ENCODE measurements at regions of chr1 and their contacts with region 1.

Region 1: DNA sequence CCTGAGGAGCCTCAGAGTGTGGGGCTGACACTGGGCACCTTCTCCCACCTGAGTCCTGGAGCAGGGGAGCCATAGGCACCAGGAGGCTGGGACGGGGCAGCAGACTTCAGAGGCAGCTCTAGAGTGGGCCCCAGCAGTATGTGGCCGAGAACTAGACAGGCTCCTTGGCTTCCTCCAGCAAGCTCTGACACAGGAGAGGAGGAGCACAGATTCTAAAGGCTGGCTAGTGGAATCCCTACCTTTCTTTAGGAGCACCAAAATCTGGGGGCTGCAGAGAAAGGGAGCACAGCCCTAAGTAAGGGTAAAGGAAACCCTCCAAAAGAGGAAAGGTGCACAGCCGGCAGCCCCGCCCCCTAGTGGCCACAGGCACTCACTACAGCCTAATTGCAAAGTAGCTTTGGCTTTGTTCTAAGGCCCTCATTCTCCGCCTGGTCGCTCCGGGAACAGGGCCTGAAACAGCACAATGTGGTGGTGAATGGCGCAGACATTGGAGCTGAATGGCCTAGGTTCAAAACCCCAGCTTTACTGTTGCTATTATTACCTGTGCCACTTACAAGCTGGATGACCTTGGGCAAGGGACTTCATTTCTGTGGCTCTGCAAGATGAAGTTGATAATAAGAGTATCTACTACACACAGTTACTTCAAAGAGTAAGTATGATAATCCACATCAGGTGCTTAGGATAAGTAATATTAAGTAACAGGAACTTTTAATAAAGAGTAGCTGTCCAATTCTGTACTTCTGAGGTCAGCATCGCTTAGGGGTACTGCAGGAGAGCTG is 8.8 kb upstream of the GUCA2A start:
- DNase-seq: peak; percentile 82
- CTCF ChIP-seq: peak; percentile 95

Region 2: DNA sequence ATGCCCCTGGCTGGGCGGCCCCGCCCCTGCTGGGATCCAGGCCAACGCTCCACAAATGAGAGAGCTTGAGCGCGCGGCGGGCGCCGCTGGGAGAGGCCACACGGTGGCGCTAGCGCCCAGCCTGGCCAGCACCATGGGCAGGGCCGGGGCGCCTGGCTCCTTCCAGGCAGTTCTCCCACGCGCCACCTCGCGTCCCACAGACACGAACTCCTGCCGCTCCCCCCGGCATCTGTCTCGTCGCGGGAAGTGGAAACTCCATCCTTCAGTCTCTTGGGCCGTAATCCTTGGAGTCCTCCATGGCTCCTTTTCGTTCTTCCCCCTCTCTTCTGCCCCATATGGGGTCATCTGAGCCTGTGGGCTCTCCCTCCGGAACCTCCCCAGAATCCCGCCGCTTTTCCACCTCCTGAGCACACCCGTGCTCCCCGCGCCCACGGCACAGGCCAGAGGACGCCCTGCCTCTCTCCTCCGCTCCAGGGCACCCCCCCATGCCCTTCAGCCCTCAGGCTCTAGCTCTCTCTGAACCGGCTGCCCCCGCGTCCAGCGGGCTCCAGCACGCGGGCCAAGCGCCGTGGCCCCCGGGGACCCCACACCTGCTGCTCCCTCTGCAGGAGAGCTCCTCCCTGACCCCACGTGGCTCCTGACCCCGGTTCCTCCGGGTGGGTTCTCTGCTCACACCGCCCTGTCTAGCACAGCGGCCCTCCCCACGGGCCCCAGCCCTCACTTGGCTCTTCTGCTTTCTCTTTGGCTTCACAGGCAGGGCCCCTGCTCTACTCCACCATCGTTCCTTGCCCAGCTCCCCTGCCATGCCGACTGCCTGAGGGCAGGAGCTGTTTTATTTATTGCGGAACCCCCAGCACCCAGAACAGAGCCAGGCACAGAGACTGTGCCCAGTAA is 656.9 kb before region 1 on chr1:
- CTCF ChIA-PET with region 1: interaction called, 26 read pairs
- POLR2A ChIA-PET with region 1: no interaction called
- DNase-seq: peak; percentile 92
- CTCF ChIP-seq: peak; percentile 98

Region 3: GRCh38 chr1:41936118-41936517 is 237.2 kb before region 1 on chr1:
- CTCF ChIA-PET with region 1: no interaction called
- POLR2A ChIA-PET with region 1: no interaction called
- DNase-seq: no peak
- CTCF ChIP-seq: no peak

Region 4: GRCh38 chr1:42146626-42147320 is 26.6 kb before region 1 on chr1:
- CTCF ChIA-PET with region 1: interaction called, 60 read pairs
- POLR2A ChIA-PET with region 1: no interaction called
- DNase-seq: peak; percentile 83
- CTCF ChIP-seq: peak; percentile 86

Region 5: DNA sequence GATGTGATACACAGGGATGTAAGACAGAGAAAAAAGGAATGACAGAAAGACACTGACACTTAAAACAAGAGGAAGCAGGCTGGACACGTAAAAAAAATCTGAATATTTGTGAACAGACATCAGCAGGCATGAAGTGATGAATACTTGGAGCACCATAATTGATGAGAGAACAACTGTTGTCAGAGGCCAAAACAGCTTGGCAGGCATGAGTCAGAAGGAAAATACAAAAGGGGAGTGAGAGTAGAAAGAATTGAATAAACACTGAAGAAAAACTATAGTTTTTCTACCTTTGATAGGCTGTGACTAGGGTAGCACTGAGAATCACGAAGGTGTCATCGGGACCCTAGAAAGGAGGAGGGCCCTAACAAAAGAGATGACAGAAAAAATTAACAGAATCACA is 12.8 kb after region 1 on chr1:
- CTCF ChIA-PET with region 1: interaction called, 33 read pairs
- POLR2A ChIA-PET with region 1: no interaction called
- DNase-seq: no peak
- CTCF ChIP-seq: no peak

Region 6: DNA sequence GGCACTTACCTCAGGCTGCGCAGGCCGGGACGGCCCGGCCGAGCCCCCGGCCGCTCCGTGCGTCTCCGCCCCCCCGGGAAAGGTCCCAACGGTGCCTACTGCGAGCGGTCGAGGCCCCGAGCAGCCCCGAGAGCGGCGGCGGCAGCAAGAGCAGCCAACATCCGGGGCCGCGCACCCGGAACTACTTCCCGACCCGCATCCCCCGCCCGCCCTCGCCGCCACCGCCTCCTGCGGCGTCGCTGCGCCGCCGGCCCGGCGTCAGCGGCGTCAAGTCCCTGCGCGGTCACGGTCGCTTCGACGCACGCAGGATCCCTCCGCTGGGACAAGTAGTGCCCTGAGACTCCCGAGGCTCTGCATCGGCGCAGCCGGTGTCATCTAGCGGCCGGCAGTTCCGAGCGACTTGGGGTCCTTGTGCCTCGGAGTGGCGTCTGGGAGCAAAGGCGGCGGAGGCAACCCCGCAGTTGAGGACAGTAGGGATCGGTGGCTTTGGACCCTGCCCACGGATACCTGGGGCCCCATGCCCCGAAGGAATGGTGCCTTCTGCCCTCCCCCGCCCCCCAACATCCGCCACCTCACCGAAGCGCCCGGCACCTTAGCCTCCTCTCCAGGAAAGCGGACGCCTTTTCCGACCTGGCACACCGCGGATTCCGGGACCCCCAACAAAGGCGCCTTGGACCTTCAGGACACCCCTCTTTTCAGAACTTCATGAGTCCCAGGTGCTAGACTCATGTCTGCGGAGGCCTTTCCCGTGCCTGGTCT is 161.9 kb after region 1 on chr1 and contains the start of gene FOXJ3:
- CTCF ChIA-PET with region 1: interaction called, 17 read pairs
- POLR2A ChIA-PET with region 1: no interaction called
- DNase-seq: peak; percentile 95
- CTCF ChIP-seq: peak; percentile 11

Region 7: GRCh38 chr1:42392967-42393848 is 219.9 kb after region 1 on chr1:
- CTCF ChIA-PET with region 1: no interaction called
- POLR2A ChIA-PET with region 1: no interaction called
- DNase-seq: no peak
- CTCF ChIP-seq: no peak